ENCODE measurements at regions of chrX and their contacts with region 1.

Region 1: GRCh38 chrX:153953342-153953830 is 8.9 kb upstream of the RENBP start:
- DNase-seq: peak; percentile 56 to 83
- H3K4me3 ChIP-seq: peak overlapping the region; percentile 12 to 39
- H3K27ac ChIP-seq: peak overlapping the region; percentile 85 to 88
- H3K4me1 ChIP-seq: peaks cover 0 to 15% (median 10%) of the 10 kb centered on the region in 4 donors
- H3K27me3 ChIP-seq: no peaks in the 10 kb centered on the region
- CTCF ChIP-seq: peak; percentile 94 to 95

Region 2: DNA sequence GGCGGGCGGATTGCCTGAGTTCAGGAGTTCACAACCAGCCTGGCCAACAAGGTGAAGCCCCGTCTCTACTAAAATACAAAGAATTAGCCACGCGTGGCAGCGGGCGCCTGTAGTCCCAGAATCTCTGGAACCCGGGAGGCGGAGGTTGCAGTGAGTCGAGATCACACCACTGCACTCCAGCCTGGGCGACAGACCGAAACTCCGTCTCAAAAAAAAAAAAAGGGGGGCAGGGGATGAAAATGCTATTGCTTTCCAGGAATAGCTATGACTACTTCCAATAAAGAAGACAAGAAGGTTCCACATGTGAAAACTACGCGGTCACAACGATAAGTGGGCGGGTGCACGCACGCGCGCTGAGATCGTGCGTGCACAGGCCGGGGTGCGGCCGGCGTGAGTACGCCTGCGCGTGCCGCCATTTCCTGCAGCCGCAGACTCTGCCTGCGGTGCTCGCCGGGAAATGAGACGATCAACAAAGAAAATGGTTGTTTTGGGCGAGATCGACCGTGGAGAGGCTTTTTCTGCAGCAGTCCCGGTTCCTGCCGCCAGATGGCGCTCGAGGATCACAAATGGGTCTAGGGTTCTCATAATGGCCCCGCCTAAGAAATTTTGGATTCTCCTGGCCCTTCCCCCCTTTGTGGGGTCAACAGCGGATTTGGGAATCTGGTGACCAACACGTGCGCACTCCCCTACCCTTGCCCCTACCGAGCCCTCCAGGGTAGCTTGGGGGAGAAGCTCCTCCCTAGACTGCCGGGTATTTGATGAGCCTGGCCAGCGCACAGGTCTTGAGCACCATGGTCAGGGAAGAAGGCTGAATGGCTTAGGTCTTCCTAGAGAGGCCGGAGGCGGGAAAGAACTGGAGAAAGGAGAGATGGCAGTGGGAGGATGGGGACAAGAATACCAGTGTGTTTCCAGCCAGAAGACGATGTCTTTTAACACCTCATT is 994.6 kb before region 1 on chrX:
- intact Hi-C with region 1: loop called (anchors 10 kb)
- DNase-seq: peak; percentile 81 to 92
- H3K4me3 ChIP-seq: peak overlapping the region; percentile 34
- H3K27ac ChIP-seq: peak overlapping the region; percentile 44 to 70
- H3K4me1 ChIP-seq: peaks cover 0 to 2% (median 0%) of the 10 kb centered on the region in 4 donors
- H3K27me3 ChIP-seq: no peaks in the 10 kb centered on the region
- CTCF ChIP-seq: peak; percentile 66 to 87

Region 3: DNA sequence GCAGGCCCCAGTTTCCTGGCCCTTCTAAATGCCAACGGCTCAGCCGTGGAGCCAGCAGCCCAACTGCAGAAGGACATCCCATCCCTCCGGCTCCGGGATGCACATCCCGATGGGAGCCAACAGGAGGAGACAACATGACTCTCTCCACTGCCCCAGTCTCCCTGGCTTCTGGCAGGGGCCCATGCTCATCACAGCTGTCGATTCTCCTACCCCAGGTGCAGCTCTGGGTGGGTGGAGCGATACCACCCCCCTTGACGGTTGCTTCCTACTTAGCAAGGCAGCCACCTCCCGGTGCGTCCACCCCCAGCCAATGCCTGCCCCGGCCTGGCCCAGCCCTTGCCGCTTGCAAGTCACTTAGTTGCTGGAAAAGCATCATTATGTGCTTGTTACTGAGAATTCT is 600.0 kb before region 1 on chrX:
- intact Hi-C with region 1: no loop called
- DNase-seq: no peak
- H3K4me3 ChIP-seq: no peak overlapping the region
- H3K27ac ChIP-seq: no peak overlapping the region
- H3K4me1 ChIP-seq: no peaks in the 10 kb centered on the region
- H3K27me3 ChIP-seq: no peaks in the 10 kb centered on the region
- CTCF ChIP-seq: no peak

Region 4: GRCh38 chrX:153708415-153708814 is 245.0 kb before region 1 on chrX:
- intact Hi-C with region 1: no loop called
- DNase-seq: peak in 1 of 2 donors; percentile 77
- H3K4me3 ChIP-seq: no peak overlapping the region
- H3K27ac ChIP-seq: no peak overlapping the region
- H3K4me1 ChIP-seq: peaks cover 0 to 12% (median 0%) of the 10 kb centered on the region in 4 donors
- H3K27me3 ChIP-seq: no peaks in the 10 kb centered on the region
- CTCF ChIP-seq: peak; percentile 50 to 55

Region 5: GRCh38 chrX:153766098-153766817 is 187.1 kb before region 1 on chrX:
- intact Hi-C with region 1: loop called (anchors 5 kb)
- DNase-seq: no peak
- H3K4me3 ChIP-seq: peak overlapping the region; percentile 29 to 44
- H3K27ac ChIP-seq: peak overlapping the region; percentile 44 to 47
- H3K4me1 ChIP-seq: peaks cover 0 to 22% (median 5%) of the 10 kb centered on the region in 4 donors
- H3K27me3 ChIP-seq: no peaks in the 10 kb centered on the region
- CTCF ChIP-seq: no peak

Region 6: GRCh38 chrX:154419732-154420364 is 466.5 kb after region 1 on chrX:
- intact Hi-C with region 1: no loop called
- DNase-seq: no peak
- H3K4me3 ChIP-seq: no peak overlapping the region
- H3K27ac ChIP-seq: no peak overlapping the region
- H3K4me1 ChIP-seq: no peaks in the 10 kb centered on the region
- H3K27me3 ChIP-seq: no peaks in the 10 kb centered on the region
- CTCF ChIP-seq: no peak

Measured in tibial artery (tissue), 4 donors.